CD4-positive, alpha-beta T cell (primary cell): ENCODE measurements at regions of chr7 and their contacts with region 1.

Region 1: DNA sequence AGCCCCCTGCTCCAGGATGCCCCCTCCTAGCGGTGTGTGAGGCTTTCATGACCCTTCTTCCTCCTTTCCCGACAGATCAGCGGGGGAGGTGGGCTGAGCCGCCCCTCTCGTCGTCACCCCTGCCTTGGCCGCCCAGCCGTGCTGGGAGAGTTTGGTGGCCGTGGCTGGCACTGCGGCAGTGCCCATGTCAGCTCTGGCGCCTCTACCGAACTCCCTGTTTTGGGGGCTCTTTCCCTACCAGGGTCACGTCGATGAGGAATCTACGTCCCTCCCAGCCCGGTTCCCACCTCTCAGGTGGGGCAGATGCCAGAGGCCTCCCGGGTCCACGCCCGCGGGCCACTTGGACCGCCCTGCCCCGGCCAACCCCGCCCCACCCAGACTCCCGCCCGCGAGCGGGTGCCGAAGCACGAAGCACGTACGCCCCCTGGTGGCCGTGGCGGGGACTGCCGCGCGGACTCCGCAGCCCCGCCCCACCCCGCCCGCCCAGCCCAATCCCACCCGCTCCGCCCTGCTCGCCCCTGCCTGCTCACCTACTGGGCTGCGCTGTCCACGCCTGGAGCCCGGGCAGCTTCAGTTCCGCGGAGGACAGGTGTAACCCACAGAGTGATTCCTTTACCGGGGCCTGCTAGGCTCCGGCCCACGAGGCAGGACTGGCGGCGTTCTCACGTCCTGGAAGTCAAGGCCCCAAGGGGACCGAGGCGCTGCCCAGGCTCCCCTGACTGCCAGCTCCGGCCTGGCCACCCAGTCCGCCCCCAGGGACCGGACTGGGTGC is 127.1 kb downstream of the UBE2H start:
- DNase-seq: peak; percentile 74 to 93 (median 88)
- ATAC-seq: peak; percentile 79
- H3K4me3 ChIP-seq: peak overlapping the region; percentile 71
- H3K4me3 Mint-ChIP-seq: peak overlapping the region; percentile 91
- H3K27ac ChIP-seq: no peak overlapping the region
- H3K27ac Mint-ChIP-seq: peak overlapping the region; percentile 39
- H3K4me1 ChIP-seq: peaks cover 28% of the 10 kb centered on the region
- H3K4me1 Mint-ChIP-seq: peaks cover 25% of the 10 kb centered on the region
- H3K27me3 ChIP-seq: no peaks in the 10 kb centered on the region
- H3K27me3 Mint-ChIP-seq: no peaks in the 10 kb centered on the region
- CTCF ChIP-seq: peak; percentile 87

Region 2: DNA sequence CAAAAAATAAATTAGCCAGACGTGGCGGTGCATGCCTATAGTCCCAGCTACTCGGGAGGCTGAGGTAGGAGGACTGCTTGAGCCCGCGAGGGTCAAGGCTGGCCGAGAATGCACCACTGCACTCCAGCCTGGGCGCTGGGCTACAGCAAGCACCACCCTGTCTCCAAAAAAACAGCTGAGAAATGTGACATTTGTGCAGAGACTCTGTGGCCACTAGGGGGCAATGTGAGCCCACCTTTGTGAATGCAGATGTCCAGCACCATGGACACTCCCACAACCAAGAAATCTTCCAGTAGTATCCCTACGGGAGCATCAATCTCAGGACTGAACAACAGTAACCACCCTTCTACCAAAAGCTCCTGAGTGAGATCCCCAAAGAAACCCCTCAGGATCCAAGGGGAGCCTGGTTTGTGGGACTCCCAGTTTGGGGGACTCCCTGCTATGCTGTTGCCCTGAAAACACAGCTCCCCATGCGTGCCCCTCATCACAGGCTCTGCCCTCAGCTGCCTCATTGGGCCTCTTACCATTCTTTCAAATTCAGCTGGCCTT is 607.1 kb before region 1 on chr7:
- CTCF ChIA-PET with region 1: no interaction called
- POLR2A ChIA-PET with region 1: no interaction called
- intact Hi-C with region 1: loop called in 1 of 2 experiments (anchors 5 kb)
- DNase-seq: peak; percentile 65 to 88 (median 72)
- ATAC-seq: peak; percentile 84
- H3K4me3 ChIP-seq: no peak overlapping the region
- H3K4me3 Mint-ChIP-seq: no peak overlapping the region
- H3K27ac ChIP-seq: no peak overlapping the region
- H3K27ac Mint-ChIP-seq: no peak overlapping the region
- H3K4me1 ChIP-seq: peaks cover 20% of the 10 kb centered on the region
- H3K4me1 Mint-ChIP-seq: peaks cover 16% of the 10 kb centered on the region
- H3K27me3 ChIP-seq: no peaks in the 10 kb centered on the region
- H3K27me3 Mint-ChIP-seq: no peaks in the 10 kb centered on the region
- CTCF ChIP-seq: peak; percentile 88

Region 3: DNA sequence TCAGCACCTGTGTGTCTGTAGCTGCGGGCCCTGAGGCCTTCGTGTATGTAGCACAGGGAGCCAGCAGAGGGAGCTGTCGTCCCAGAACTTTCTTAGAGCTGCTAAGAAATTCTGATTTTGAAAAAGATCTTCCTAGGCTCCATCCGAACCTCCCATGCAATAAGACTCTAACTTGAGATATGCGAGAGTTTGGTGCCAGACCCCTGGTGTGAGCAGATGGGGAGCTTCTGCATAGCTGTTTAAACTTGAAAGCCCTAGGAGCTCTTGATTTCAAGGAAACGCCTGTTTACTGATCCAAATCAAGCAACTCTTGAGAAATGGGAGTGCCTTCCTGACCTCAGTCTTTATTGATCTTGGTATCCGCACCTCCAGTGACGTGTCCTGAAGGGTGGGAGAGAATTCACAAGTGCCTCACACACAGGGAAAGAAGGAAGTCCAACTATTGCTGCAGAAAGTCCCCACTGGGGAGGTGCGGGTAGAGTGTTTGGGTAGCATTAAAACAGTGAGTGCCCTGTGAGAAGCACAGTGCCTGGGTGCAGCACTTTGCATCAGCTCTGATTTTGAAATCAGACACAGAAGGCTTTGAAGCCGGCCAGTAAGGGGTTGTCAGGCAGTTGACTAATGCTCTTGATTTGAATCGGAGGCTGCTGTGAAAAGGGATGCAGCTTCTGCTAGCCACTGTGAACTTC is 457.8 kb before region 1 on chr7:
- CTCF ChIA-PET with region 1: no interaction called
- POLR2A ChIA-PET with region 1: no interaction called
- intact Hi-C with region 1: loop called (anchors 1 to 2 kb)
- DNase-seq: peak; percentile 51 to 84 (median 65)
- ATAC-seq: peak; percentile 85
- H3K4me3 ChIP-seq: peak overlapping the region; percentile 24
- H3K4me3 Mint-ChIP-seq: peak overlapping the region; percentile 9
- H3K27ac ChIP-seq: no peak overlapping the region
- H3K27ac Mint-ChIP-seq: no peak overlapping the region
- H3K4me1 ChIP-seq: peaks cover 15% of the 10 kb centered on the region
- H3K4me1 Mint-ChIP-seq: peaks cover 15% of the 10 kb centered on the region
- H3K27me3 ChIP-seq: no peaks in the 10 kb centered on the region
- H3K27me3 Mint-ChIP-seq: no peaks in the 10 kb centered on the region
- CTCF ChIP-seq: peak; percentile 78

Region 4: DNA sequence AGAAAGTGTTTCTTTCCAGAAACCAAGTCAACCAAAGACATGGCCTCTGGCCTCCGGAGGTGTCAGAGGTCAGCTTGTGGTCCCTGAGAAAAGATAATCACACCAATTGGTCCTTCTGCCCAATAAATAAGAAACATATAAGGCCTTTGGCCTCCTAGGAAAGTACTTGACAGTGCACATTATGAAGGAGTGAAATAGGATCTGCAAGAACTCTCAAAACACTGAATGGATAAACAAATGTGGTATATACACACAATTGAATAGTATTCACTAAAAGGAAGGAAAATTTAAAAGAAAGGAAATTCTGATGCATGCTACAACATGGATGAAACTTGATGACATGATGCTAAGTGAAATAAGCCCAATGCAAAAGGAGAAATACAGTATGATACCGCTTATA is 249.5 kb before region 1 on chr7:
- CTCF ChIA-PET with region 1: no interaction called
- POLR2A ChIA-PET with region 1: no interaction called
- intact Hi-C with region 1: loop called in 1 of 2 experiments (anchors 5 kb)
- DNase-seq: no peak
- ATAC-seq: no peak
- H3K4me3 ChIP-seq: no peak overlapping the region
- H3K4me3 Mint-ChIP-seq: no peak overlapping the region
- H3K27ac ChIP-seq: no peak overlapping the region
- H3K27ac Mint-ChIP-seq: no peak overlapping the region
- H3K4me1 ChIP-seq: no peaks in the 10 kb centered on the region
- H3K4me1 Mint-ChIP-seq: no peaks in the 10 kb centered on the region
- H3K27me3 ChIP-seq: no peaks in the 10 kb centered on the region
- H3K27me3 Mint-ChIP-seq: no peaks in the 10 kb centered on the region
- CTCF ChIP-seq: no peak

Region 5: DNA sequence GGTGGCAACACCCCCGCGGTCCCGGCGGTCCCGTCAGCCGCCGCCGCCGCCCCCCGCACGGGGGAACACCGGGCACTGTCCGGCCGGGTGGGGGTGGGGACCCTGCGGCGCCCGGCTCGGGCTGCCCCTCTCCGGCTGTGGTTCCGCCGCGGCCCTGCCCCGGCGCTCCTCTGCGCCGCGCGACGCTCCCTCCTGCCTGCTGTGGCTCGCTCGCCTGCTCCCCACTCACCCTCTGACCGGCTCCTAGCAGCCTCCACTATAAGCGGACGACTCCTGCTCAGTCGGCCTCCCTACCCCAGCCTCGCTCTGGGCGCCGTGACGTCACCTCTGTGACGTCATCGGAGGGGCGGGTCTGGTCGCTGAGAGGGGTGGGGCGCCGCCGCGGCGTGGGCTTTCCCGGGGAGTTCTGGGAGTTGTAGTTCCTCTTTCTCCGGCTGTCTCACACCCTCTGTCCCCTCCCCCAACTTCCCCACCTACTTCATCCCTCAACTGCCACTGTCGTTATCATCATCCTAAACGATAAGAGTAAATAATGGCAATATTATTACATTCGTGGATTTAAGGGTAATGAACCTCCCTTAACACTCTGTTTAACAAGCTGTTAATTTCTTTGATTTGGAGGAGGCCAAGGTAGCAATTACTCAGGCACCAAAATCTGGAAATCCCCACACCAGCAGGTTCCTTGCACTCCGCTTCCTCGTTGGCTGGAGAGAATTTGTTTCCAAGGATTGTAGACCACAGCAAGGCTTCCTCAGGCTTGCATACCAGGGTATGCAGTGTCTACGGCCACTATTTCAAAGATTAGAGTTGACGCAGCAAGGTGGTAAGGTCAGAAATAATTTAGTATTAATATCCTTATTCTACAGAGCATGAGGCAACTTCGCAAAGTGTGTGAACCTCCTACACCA is 127.2 kb after region 1 on chr7 and contains the start of gene UBE2H:
- CTCF ChIA-PET with region 1: no interaction called
- POLR2A ChIA-PET with region 1: interaction called, 4 read pairs
- intact Hi-C with region 1: loop called in 1 of 2 experiments (anchors 2 kb)
- DNase-seq: peak; percentile 84 to 96 (median 91)
- ATAC-seq: peak; percentile 75
- H3K4me3 ChIP-seq: peak within 1 kb of the TSS; percentile 78
- H3K4me3 Mint-ChIP-seq: peak within 1 kb of the TSS; percentile 99
- H3K27ac ChIP-seq: peak within 1 kb of the TSS; percentile 82 to 89
- H3K27ac Mint-ChIP-seq: no peak within 1 kb of the TSS
- H3K4me1 ChIP-seq: peaks cover 35% of the 10 kb centered on the region
- H3K4me1 Mint-ChIP-seq: peaks cover 6% of the 10 kb centered on the region
- H3K27me3 ChIP-seq: no peaks in the 10 kb centered on the region
- H3K27me3 Mint-ChIP-seq: no peaks in the 10 kb centered on the region
- CTCF ChIP-seq: no peak
- total RNA-seq, gene UBE2H: 52.1 to 52.5 TPM